AG04449 (cell line): ENCODE measurements at regions of chr6 and their contacts with region 1.

Region 1: DNA sequence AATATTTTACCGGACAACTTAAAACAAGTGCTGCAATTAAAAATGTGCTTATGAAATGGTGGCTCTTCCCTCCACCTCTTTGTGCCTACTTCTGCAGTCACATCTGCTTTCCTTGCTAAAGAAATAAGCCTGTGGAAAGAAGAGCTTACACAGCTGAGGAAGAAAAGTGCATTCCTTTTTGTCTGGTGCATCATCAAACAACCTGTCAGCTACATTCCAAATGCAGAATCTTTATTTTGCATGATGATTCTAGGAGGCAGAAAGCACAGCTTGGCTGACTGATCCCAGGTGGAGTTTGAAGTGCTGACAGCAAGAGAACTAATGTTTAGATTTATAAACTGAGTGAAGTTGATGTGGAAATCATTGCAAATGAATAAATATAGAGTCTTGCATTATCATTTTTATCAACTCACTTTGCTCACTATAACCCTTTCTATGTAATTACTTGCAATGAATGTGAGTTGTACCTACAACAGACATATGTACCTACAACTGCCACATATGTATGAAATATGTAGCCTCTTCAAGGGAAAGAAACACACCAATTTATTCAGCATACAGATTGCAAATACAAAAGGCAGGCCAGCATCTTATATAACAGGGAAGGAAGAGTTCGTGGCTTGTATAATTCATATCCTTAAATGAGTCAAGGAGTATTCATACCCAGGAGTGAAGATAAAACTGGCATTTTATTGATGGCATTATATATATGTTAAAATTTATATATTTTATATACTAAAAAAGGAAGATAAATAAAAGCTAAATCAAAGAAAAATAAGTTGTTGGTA is 223.4 kb upstream of the MCHR2 start:
- DNase-seq: no peak
- H3K4me3 ChIP-seq: no peak overlapping the region
- CTCF ChIP-seq: no peak

Region 2: GRCh38 chr6:99979953-99980352 is 237.5 kb before region 1 on chr6:
- CTCF ChIA-PET with region 1: no interaction called
- POLR2A ChIA-PET with region 1: no interaction called
- DNase-seq: no peak
- H3K4me3 ChIP-seq: no peak overlapping the region
- CTCF ChIP-seq: no peak

Region 3: DNA sequence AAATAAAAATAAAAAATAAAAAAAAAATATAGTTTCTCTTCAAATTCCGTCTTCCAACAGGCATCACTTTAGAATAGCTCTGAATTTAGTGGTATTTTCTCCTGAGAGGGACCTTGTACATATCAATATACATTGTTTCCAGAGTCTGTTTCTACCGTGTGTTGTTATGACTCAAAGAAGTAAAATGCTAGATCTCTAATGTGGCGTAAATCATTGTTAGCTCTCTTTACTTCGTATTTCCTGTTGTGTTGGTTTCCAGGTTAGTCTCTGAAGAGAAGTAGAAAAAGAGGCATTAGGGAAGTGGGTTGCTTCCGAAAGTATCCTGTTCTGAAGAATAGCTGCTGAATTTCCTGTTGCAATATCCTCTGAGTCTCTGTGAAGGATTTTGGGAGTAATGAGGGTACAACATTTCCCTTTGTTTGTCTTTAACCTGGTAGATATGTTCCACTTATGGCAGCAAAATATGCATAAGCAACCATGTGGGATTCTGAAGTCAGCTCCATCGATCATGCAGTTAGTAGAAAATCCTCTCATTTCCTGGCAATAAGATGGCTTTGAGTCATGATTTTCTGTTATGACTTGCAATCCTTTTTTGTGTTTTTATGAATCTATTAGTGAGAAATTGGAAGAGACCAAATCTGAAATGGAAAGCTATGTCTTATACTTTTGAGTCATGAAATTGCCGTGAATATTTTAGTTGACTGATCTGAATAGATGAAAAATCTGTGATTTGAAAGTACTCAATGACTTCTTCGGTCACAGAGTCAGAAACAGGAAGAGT is 181.4 kb before region 1 on chr6:
- CTCF ChIA-PET with region 1: no interaction called
- POLR2A ChIA-PET with region 1: no interaction called
- DNase-seq: no peak
- H3K4me3 ChIP-seq: no peak overlapping the region
- CTCF ChIP-seq: no peak

Region 4: DNA sequence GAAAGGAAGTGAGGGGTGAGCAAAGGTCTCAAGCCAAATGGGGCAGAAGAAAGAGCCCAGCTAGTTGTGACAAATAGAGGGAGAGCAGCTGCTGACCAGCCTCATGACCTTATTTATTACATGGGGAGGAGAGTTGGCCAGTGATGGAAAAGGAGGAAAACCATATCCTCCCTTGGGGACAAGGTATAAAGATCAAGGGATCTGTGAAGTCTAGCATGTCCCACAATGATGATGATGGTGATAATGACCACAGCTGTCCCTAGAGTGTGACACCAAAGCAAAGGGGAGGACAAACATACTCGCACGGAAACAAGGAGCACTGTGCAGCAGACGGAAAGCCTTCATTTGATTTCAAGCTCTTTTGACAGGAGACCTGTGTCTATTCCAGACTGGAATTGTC is 32.9 kb before region 1 on chr6:
- CTCF ChIA-PET with region 1: no interaction called
- POLR2A ChIA-PET with region 1: no interaction called
- DNase-seq: no peak
- H3K4me3 ChIP-seq: no peak overlapping the region
- CTCF ChIP-seq: no peak

Region 5: DNA sequence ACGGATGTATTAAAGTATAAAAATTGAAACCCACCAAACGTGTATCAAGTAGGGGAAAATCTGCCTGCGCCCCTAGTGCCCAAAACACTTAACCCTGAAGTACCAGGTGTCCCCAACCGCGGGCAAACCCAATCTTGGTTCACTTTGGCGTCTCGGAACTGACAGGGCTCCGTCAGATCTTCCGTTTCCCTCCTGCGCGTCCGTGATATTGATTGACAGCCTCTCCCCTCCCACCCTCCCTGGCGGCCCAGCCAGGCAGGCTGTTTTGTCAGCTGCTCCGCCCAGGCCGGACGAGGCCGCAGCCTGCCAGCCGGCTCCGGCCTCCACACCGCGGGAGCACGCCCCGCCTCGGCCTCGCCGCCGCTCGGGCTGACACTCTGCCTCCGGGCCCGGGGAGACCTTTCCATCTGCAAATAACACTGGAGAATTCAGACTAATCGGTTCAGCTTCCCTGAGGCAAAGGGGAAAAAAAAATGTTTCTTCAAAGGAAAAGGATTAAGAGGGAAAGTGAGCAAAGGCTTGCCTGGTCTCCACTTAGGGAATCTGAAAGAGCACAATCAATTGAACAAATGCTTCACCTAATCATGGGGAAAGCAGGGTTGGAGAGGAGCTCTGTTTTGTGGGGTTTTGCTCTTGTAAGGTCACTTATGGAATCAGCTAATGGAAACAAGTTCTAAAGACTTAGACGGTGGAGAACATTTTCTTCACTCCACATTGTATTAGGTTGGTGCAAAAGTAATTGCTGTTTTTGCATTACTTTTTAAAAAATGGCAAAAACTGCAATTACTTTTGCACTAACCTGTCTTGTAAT is 11.6 kb after region 1 on chr6:
- CTCF ChIA-PET with region 1: interaction called, 17 read pairs
- POLR2A ChIA-PET with region 1: no interaction called
- DNase-seq: no peak
- H3K4me3 ChIP-seq: peak overlapping the region; percentile 35
- CTCF ChIP-seq: peak; percentile 4